Activated CD4-positive, alpha-beta T cell treated with anti-CD3 and anti-CD28 coated beads, Interleukin-2, amount 10 ng/mL, durations not matched to agents 24 days and 14 days (primary cell): ENCODE measurements at regions of chr2 and their contacts with region 1.

Region 1: GRCh38 chr2:227766373-227766883 is 20.7 kb downstream of the SCYGR8 start:
- DNase-seq: peak; percentile 85
- H3K4me3 Mint-ChIP-seq: no peak overlapping the region
- H3K27ac Mint-ChIP-seq: no peak overlapping the region
- H3K4me1 Mint-ChIP-seq: no peaks in the 10 kb centered on the region
- H3K27me3 Mint-ChIP-seq: no peaks in the 10 kb centered on the region

Region 2: DNA sequence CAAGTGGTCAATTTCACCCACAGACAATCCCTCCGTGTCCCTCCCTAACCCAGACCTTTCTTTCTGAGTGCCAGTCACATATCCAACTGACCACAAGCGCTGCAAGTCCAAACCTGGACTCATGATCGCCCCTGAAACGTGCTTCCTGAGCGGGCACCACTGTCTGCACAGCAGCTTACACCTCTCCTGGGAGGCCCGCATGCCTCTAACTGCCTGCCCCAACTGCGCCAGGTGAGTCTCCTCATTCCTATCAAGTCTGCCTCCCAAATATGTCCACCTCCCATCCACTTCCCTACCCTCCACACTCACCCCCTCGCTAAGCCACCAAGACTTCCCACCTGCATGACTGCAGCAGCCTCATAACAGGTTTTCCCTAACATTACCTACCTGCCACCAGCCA is 635.8 kb before region 1 on chr2:
- intact Hi-C with region 1: loop called (anchors 1 kb)
- DNase-seq: no peak
- H3K4me3 Mint-ChIP-seq: no peak overlapping the region
- H3K27ac Mint-ChIP-seq: no peak overlapping the region
- H3K4me1 Mint-ChIP-seq: no peaks in the 10 kb centered on the region
- H3K27me3 Mint-ChIP-seq: peaks cover 13% of the 10 kb centered on the region

Region 3: GRCh38 chr2:227238238-227239237 is 527.9 kb before region 1 on chr2:
- intact Hi-C with region 1: loop called (anchors 2 kb)
- DNase-seq: peak; percentile 86
- H3K4me3 Mint-ChIP-seq: no peak overlapping the region
- H3K27ac Mint-ChIP-seq: no peak overlapping the region
- H3K4me1 Mint-ChIP-seq: no peaks in the 10 kb centered on the region
- H3K27me3 Mint-ChIP-seq: peaks cover 13% of the 10 kb centered on the region

Region 4: GRCh38 chr2:227406177-227407031 is 360.0 kb before region 1 on chr2:
- intact Hi-C with region 1: loop called (anchors 1 kb)
- DNase-seq: peak; percentile 59
- H3K4me3 Mint-ChIP-seq: no peak overlapping the region
- H3K27ac Mint-ChIP-seq: peak overlapping the region; percentile 7
- H3K4me1 Mint-ChIP-seq: peaks cover 42% of the 10 kb centered on the region
- H3K27me3 Mint-ChIP-seq: no peaks in the 10 kb centered on the region

Region 5: GRCh38 chr2:227471924-227472264 is 294.5 kb before region 1 on chr2 and contains the start of gene AGFG1:
- intact Hi-C with region 1: loop called (anchors 10 kb)
- DNase-seq: peak; percentile 96
- H3K4me3 Mint-ChIP-seq: peak within 1 kb of the TSS; percentile 93
- H3K27ac Mint-ChIP-seq: peak within 1 kb of the TSS; percentile 84
- H3K4me1 Mint-ChIP-seq: peaks cover 41% of the 10 kb centered on the region
- H3K27me3 Mint-ChIP-seq: no peaks in the 10 kb centered on the region
- total RNA-seq, gene AGFG1: 221 and 229 TPM in 2 replicates

Region 6: GRCh38 chr2:227655454-227655853 is 111.0 kb before region 1 on chr2:
- intact Hi-C with region 1: loop called (anchors 2 kb)
- DNase-seq: no peak
- H3K4me3 Mint-ChIP-seq: no peak overlapping the region
- H3K27ac Mint-ChIP-seq: no peak overlapping the region
- H3K4me1 Mint-ChIP-seq: peaks cover 3% of the 10 kb centered on the region
- H3K27me3 Mint-ChIP-seq: peaks cover 11% of the 10 kb centered on the region